Pancreas (tissue), 10 donors: ENCODE measurements at regions of chr17 and their contacts with region 1.

Region 1: GRCh38 chr17:66727639-66728570 is 107.0 kb upstream of the CACNG5 start:
- DNase-seq: peak; percentile 61 to 88 (median 74)
- ATAC-seq: peak; percentile 67 to 95 (median 90)
- H3K4me3 ChIP-seq: no peak overlapping the region
- H3K27ac ChIP-seq: no peak overlapping the region
- H3K4me1 ChIP-seq: peaks cover 0 to 14% (median 12%) of the 10 kb centered on the region in 3 donors
- H3K27me3 ChIP-seq: no peaks in the 10 kb centered on the region
- CTCF ChIP-seq: peak; percentile 26 to 52 (median 41)

Region 2: GRCh38 chr17:66897141-66897540 is 169.2 kb after region 1 on chr17:
- intact Hi-C with region 1: loop called in 2 of 3 experiments (anchors 5 to 10 kb)
- DNase-seq: no peak
- ATAC-seq: no peak
- H3K4me3 ChIP-seq: no peak overlapping the region
- H3K27ac ChIP-seq: no peak overlapping the region
- H3K4me1 ChIP-seq: no peaks in the 10 kb centered on the region
- H3K27me3 ChIP-seq: no peaks in the 10 kb centered on the region
- CTCF ChIP-seq: no peak

Region 3: GRCh38 chr17:66906321-66907278 is 178.7 kb after region 1 on chr17:
- intact Hi-C with region 1: loop called in 1 of 3 experiments (anchors 5 kb)
- DNase-seq: peak; percentile 80 to 93 (median 88)
- ATAC-seq: peak; percentile 45 to 77 (median 71)
- H3K4me3 ChIP-seq: no peak overlapping the region
- H3K27ac ChIP-seq: no peak overlapping the region
- H3K4me1 ChIP-seq: peaks cover 13 to 18% (median 15%) of the 10 kb centered on the region in 3 donors
- H3K27me3 ChIP-seq: no peaks in the 10 kb centered on the region
- CTCF ChIP-seq: peak; percentile 79 to 83 (median 80)